ENCODE measurements at regions of chr9 and their contacts with region 1.

Region 1: DNA sequence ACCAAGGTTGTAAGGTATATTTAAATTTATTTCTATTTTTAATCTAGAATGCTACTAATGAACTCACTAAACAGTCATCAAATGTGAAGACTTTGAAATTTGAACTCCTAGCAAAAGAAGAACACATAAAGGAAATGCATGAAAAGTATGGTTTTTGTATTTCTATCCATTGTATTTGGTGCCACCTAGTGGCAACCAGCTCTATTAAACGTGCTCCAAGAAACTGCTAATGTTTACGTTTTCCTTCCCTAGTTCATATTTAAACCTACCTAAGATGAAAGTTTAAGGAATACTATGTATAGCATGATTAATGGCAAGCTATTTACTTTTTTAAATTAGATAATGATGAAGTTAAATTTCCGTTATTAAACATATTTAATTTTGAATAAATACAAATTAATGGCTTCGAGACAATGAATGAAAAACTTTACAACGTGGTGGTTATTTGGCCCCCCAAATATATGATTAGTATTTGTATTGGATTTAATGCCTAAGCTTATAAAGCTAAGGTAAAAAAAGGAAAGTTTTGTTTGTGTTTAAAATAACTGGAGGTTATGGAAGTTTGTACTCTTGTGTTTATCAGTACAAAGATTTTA is 115.9 kb upstream of the SH3GL2 start:
- DNase-seq: peak in 2 of 5 donors; percentile 5 to 14
- H3K4me3 ChIP-seq: no peak overlapping the region
- H3K4me3 Mint-ChIP-seq: no peak overlapping the region
- H3K27ac ChIP-seq: no peak overlapping the region
- H3K27ac Mint-ChIP-seq: no peak overlapping the region
- H3K4me1 ChIP-seq: no peaks in the 10 kb centered on the region
- H3K4me1 Mint-ChIP-seq: no peaks in the 10 kb centered on the region
- H3K27me3 ChIP-seq: no peaks in the 10 kb centered on the region
- H3K27me3 Mint-ChIP-seq: no peaks in the 10 kb centered on the region

Region 2: GRCh38 chr9:17116400-17116837 is 346.5 kb before region 1 on chr9:
- CTCF ChIA-PET with region 1: interaction called, 16 read pairs
- POLR2A ChIA-PET with region 1: no interaction called
- intact Hi-C with region 1: loop called (anchors 2 kb)
- DNase-seq: no peak
- H3K4me3 ChIP-seq: no peak overlapping the region
- H3K4me3 Mint-ChIP-seq: no peak overlapping the region
- H3K27ac ChIP-seq: no peak overlapping the region
- H3K27ac Mint-ChIP-seq: no peak overlapping the region
- H3K4me1 ChIP-seq: no peaks in the 10 kb centered on the region
- H3K4me1 Mint-ChIP-seq: no peaks in the 10 kb centered on the region
- H3K27me3 ChIP-seq: no peaks in the 10 kb centered on the region
- H3K27me3 Mint-ChIP-seq: no peaks in the 10 kb centered on the region

Region 3: DNA sequence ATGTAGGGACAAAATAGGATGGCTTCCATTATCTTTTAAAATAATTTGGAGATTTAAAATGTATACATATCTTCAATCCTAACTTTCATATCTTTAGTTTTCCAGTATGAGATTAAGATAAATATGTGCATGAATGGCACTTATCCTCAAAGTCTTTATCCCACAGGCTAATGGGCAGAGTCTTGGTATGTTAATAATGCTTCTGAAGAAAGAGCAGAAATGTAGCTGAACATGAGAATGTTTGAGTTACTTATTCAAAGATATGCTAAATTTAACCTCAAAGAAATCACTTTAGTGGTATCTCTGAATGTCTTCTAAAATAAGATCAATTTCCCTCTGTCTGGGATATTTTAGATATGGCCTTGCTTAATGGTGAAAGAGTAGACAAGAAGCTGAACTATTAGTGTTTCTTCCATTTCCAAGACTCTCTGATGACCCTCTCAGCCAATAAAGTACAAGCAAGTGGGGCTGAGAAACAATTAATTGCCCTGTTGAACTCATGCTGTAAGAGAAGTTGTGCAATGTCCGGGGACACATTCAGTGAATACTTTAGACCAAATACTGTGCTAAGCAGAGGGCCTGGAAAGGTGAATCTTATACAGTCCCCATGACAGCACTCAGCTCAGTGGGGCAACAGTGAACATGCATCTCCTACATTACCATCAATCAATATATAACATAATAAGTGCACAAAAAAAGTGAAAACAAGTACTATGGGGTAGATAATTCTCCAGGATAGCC is 961.0 kb after region 1 on chr9:
- CTCF ChIA-PET with region 1: no interaction called
- POLR2A ChIA-PET with region 1: no interaction called
- intact Hi-C with region 1: no loop called
- DNase-seq: no peak
- H3K4me3 ChIP-seq: no peak overlapping the region
- H3K4me3 Mint-ChIP-seq: no peak overlapping the region
- H3K27ac ChIP-seq: no peak overlapping the region
- H3K27ac Mint-ChIP-seq: no peak overlapping the region
- H3K4me1 ChIP-seq: no peaks in the 10 kb centered on the region
- H3K4me1 Mint-ChIP-seq: no peaks in the 10 kb centered on the region
- H3K27me3 ChIP-seq: no peaks in the 10 kb centered on the region
- H3K27me3 Mint-ChIP-seq: peaks cover 0 to 1% of the 10 kb centered on the region in 2 donors